ENCODE measurements at regions of chr1 and their contacts with region 1.

Region 1: DNA sequence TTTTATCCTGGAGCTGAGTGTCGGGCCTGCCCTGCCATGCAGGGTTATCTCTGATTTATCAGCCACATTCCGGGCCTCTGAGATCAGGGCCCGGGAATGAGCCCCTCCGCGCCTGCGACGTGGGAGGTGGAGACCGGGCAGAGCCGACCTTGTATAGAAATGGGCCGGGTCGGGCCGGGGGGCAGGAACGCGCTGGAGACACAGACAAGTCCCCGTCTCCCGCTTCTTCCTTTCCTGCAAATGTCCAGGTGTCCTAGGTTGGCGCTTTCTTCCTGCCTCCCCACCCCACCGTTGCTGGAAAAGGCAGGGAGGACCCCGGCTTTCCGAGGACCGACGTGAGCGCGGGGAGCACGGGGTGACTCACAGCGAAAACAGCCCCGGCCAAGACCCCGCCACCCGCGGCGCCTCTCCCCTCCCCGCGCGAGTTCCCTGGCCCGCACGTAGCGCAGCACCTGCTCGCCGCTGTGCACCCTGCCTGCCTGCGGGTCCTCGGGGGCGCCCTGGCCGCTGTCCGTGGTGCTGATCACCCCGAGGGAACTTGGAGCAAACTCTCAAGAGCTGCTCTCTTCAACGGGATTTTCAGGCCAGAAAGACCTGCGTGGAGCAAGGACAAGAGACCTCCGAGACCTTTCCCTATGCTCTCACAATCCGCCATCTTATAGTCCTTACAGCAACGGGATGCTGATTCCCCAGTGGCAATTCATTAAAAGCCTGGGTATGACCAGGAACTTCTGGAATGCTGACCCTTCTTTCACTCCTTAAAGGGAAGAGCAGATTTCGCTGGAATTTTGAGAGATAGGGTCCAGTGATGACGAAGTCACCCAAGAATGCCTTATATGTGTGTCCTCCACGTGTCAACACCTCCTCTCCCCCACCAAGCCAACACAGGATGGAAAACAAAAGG is 475 bp upstream of the NPPB start:
- DNase-seq: peak; percentile 48 to 80 (median 77)
- ATAC-seq: peak; percentile 99
- H3K4me3 ChIP-seq: no peak overlapping the region
- H3K4me3 Mint-ChIP-seq: no peak overlapping the region
- H3K27ac ChIP-seq: no peak overlapping the region
- H3K27ac Mint-ChIP-seq: no peak overlapping the region
- H3K4me1 ChIP-seq: no peaks in the 10 kb centered on the region
- H3K4me1 Mint-ChIP-seq: no peaks in the 10 kb centered on the region
- H3K27me3 ChIP-seq: peaks cover 13 to 15% of the 10 kb centered on the region in 2 experiments
- H3K27me3 Mint-ChIP-seq: peaks cover 56% of the 10 kb centered on the region
- CTCF ChIP-seq: peak; percentile 34

Region 2: GRCh38 chr1:11845641-11846335 is 13.4 kb before region 1 on chr1:
- CTCF ChIA-PET with region 1: interaction called, 3 read pairs
- POLR2A ChIA-PET with region 1: no interaction called
- intact Hi-C with region 1: loop called in 1 of 2 experiments (anchors 1 kb)
- DNase-seq: peak in 1 of 9 experiments; percentile 33
- ATAC-seq: peak; percentile 36
- H3K4me3 ChIP-seq: no peak overlapping the region
- H3K4me3 Mint-ChIP-seq: no peak overlapping the region
- H3K27ac ChIP-seq: no peak overlapping the region
- H3K27ac Mint-ChIP-seq: no peak overlapping the region
- H3K4me1 ChIP-seq: no peaks in the 10 kb centered on the region
- H3K4me1 Mint-ChIP-seq: peaks cover 2% of the 10 kb centered on the region
- H3K27me3 ChIP-seq: no peaks in the 10 kb centered on the region
- H3K27me3 Mint-ChIP-seq: no peaks in the 10 kb centered on the region
- CTCF ChIP-seq: no peak

Region 3: GRCh38 chr1:11898831-11899467 is 39.7 kb after region 1 on chr1:
- CTCF ChIA-PET with region 1: interaction called, 3 read pairs
- POLR2A ChIA-PET with region 1: no interaction called
- intact Hi-C with region 1: loop called in 1 of 2 experiments (anchors 5 kb)
- DNase-seq: peak in 2 of 9 experiments; percentile 21 to 23
- ATAC-seq: no peak
- H3K4me3 ChIP-seq: no peak overlapping the region
- H3K4me3 Mint-ChIP-seq: no peak overlapping the region
- H3K27ac ChIP-seq: no peak overlapping the region
- H3K27ac Mint-ChIP-seq: no peak overlapping the region
- H3K4me1 ChIP-seq: no peaks in the 10 kb centered on the region
- H3K4me1 Mint-ChIP-seq: no peaks in the 10 kb centered on the region
- H3K27me3 ChIP-seq: peaks cover 24 to 34% of the 10 kb centered on the region in 2 experiments
- H3K27me3 Mint-ChIP-seq: peaks cover 47% of the 10 kb centered on the region
- CTCF ChIP-seq: no peak